Ascending aorta (tissue), 2 donors: ENCODE measurements at regions of chr12 and their contacts with region 1.

Region 1: DNA sequence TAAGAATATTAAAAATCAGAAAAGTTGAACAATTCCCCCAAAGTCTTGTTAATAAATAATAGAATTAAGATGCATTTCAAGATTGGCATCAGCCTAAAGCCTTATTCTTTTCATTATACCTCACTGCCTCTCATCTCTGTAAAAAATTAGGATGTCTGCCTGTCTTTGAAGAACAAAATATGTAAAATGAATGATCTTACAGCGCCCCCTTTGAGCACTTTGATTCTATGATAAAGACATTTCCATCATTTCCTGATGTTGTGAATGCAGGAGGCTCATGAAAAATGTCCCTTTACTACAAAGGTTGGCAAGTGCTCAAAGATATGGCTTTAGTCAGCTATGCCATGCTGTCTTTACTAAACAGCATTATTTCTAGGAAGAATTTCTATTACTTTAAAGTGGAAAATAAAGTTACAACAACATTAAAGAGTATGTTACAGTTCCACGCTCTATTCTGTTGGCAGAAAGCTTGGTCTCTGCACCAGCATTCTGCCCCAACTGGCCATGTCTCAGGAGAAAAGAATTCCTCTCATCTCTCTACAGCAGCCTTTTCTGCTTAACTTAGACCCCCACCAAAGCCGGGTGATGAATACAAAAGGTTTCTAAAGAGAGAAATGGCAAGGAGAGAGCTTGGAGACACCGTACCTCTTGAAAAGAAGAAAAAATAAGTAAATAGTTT is 95.1 kb downstream of the LLPH start:
- DNase-seq: no peak
- H3K4me3 ChIP-seq: no peak overlapping the region
- H3K27ac ChIP-seq: peak overlapping the region; percentile 76 to 77
- H3K4me1 ChIP-seq: peaks cover 0 to 16% of the 10 kb centered on the region in 2 donors
- H3K27me3 ChIP-seq: no peaks in the 10 kb centered on the region
- CTCF ChIP-seq: peak in 2 of 3 experiments; percentile 16 to 40

Region 2: DNA sequence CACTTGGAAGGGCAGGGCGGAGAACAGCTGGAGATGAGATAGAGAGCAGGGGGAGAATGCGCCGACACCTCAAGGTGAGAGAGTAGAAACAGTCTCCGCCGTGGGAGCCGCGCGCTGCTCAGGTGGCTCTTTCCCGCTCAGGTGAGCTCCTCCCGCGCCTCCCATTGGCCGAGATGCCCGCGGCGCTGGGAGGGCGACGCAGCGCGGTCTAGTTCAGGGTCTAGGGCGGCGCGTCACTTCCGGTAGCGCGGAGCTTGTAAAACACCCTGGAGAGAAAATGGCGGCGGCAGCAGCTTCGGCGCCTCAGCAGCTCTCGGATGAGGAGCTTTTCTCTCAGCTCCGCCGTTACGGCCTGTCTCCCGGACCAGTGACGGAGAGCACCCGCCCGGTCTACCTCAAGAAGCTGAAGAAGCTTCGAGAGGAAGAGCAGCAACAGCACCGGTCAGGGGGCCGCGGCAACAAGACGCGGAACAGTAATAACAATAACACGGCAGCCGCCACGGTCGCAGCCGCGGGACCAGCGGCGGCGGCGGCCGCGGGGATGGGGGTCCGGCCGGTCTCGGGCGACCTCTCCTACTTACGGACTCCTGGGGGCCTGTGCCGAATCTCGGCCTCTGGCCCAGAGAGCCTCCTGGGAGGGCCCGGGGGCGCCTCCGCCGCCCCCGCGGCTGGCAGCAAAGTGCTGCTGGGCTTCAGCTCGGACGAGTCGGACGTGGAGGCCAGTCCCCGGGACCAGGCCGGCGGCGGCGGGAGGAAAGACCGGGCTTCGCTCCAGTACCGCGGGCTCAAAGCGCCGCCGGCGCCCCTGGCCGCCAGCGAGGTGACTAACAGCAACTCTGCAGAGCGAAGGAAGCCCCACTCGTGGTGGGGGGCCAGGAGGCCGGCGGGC is 865.9 kb before region 1 on chr12 and contains the start of gene LEMD3:
- intact Hi-C with region 1: loop called (anchors 10 kb)
- DNase-seq: peak; percentile 82 to 97
- H3K4me3 ChIP-seq: peak within 1 kb of the TSS; percentile 79 to 89
- H3K27ac ChIP-seq: peak within 1 kb of the TSS; percentile 97 to 99
- H3K4me1 ChIP-seq: peaks cover 2 to 28% of the 10 kb centered on the region in 2 donors
- H3K27me3 ChIP-seq: no peaks in the 10 kb centered on the region
- CTCF ChIP-seq: peak in 1 of 3 experiments; percentile 1
- total RNA-seq, gene LEMD3: 10.6 TPM

Region 3: DNA sequence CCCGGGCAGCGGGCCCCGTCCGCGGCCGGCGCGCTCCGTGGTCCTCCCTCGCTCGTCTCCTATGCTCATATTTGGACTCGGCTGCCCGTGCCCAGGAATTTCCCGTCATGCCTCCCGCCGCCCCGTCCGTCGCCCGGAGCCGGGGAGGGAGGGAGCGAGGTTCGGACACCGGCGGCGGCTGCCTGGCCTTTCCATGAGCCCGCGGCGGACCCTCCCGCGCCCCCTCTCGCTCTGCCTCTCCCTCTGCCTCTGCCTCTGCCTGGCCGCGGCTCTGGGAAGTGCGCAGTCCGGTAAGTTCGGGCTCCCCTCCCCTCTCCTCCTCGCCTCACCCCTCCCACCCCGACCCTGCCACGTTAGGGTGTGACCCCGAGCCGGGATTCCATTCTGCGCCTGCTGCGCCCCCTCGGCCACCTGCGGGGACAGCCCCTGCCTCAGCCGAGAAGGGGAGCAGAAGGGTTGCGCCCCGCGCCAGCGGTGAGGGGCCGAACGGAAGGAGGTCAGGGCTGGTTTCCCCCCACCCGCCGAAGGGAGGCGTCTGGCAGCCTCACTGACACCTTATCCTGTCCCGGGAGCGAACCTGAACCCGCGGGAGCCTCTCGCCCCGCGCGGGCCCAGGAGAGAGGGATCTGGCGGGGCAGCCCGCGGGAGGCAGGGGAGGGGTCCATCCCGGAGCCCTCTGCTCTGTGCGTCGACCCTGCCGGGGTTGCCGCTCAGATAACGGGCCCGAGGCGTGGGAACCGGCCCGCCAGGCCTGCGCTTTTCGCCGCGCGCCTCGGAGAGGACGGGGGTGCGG is 756.7 kb before region 1 on chr12 and contains the start of gene MSRB3:
- intact Hi-C with region 1: loop called (anchors 10 kb)
- DNase-seq: peak in 1 of 2 donors; percentile 88
- H3K4me3 ChIP-seq: peak within 1 kb of the TSS; percentile 79 to 94
- H3K27ac ChIP-seq: peak within 1 kb of the TSS; percentile 97 to 99
- H3K4me1 ChIP-seq: peaks cover 0 to 23% of the 10 kb centered on the region in 2 donors
- H3K27me3 ChIP-seq: no peaks in the 10 kb centered on the region
- CTCF ChIP-seq: peak in 1 of 3 experiments; percentile 11
- total RNA-seq, gene MSRB3: 79.4 TPM

Region 4: GRCh38 chr12:65536876-65537661 is 498.4 kb before region 1 on chr12:
- intact Hi-C with region 1: loop called (anchors 5 kb)
- DNase-seq: peak; percentile 51 to 92
- H3K4me3 ChIP-seq: no peak overlapping the region
- H3K27ac ChIP-seq: peak overlapping the region; percentile 71 to 81
- H3K4me1 ChIP-seq: peaks cover 3 to 10% of the 10 kb centered on the region in 2 donors
- H3K27me3 ChIP-seq: no peaks in the 10 kb centered on the region
- CTCF ChIP-seq: no peak

Region 5: GRCh38 chr12:65602610-65603295 is 432.7 kb before region 1 on chr12:
- intact Hi-C with region 1: loop called (anchors 2 kb)
- DNase-seq: peak; percentile 10 to 82
- H3K4me3 ChIP-seq: peak overlapping the region in 1 of 2 donors; percentile 47
- H3K27ac ChIP-seq: peak overlapping the region; percentile 35 to 47
- H3K4me1 ChIP-seq: peaks cover 3 to 4% of the 10 kb centered on the region in 2 donors
- H3K27me3 ChIP-seq: no peaks in the 10 kb centered on the region
- CTCF ChIP-seq: peak; percentile 71 to 77 (median 76)

Region 6: GRCh38 chr12:66301944-66302826 is 266.8 kb after region 1 on chr12 and contains the start of gene HELB:
- intact Hi-C with region 1: loop called (anchors 5 kb)
- DNase-seq: peak; percentile 93 to 99
- H3K4me3 ChIP-seq: peak within 1 kb of the TSS; percentile 79 to 82
- H3K27ac ChIP-seq: peak within 1 kb of the TSS; percentile 67 to 71
- H3K4me1 ChIP-seq: peaks cover 0 to 4% of the 10 kb centered on the region in 2 donors
- H3K27me3 ChIP-seq: no peaks in the 10 kb centered on the region
- CTCF ChIP-seq: no peak
- total RNA-seq, gene HELB: 3.1 TPM